Lower lobe of right lung (tissue), 2 donors: ENCODE measurements at regions of chr18 and their contacts with region 1.

Region 1: DNA sequence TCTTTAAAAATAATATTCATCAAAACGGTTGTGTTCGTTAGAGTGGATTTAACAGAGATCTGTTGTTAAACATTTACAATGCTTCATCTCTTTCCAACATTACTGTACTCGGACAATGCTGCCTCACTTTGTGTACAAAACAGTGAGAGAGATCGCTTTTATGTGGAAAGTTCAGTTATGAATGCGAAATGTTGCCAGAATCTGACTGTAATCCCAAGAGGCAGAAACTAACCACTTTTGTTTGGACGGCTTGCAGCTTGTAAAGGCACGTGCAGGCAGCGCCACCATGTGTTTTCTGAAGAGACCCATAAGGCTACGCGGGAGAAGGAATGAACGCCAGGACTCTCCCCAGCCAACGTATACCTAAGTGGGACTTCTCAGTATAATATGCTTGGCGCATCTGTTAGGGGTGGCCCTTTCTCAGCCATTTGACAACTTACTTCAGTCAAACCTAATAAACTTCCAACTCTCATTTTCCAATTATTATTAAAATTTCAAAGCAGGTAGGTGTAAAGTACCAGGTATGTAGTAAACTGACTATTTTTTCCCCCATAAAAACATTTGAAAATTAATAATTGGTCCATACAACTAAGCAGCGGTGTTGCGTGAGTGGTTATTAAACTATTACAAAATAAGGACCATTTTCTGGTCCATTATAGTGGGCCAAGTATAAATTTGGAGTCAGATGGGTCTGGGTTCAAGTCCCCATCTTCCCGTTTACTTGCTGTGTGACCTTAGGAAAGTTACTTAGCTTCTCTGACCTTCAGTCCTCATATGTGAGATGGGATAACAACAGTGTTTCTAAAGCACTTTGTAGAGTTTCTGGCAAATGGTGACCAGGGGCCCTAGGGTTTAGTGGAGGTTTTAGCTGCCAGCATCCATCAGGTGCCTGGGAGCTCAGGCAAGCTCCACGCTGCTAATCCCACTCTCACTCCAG is 5.6 kb upstream of the NAPG start:
- DNase-seq: peak; percentile 88
- ATAC-seq: peak; percentile 86 to 93
- H3K4me3 ChIP-seq: no peak overlapping the region
- H3K27ac ChIP-seq: no peak overlapping the region
- H3K4me1 ChIP-seq: peaks cover 26% of the 10 kb centered on the region
- H3K27me3 ChIP-seq: no peaks in the 10 kb centered on the region
- CTCF ChIP-seq: peak; percentile 78

Region 2: GRCh38 chr18:9971313-9971920 is 548.9 kb before region 1 on chr18:
- intact Hi-C with region 1: loop called (anchors 5 kb)
- DNase-seq: no peak
- ATAC-seq: peak; percentile 79
- H3K4me3 ChIP-seq: no peak overlapping the region
- H3K27ac ChIP-seq: no peak overlapping the region
- H3K4me1 ChIP-seq: peaks cover 8% of the 10 kb centered on the region
- H3K27me3 ChIP-seq: no peaks in the 10 kb centered on the region
- CTCF ChIP-seq: peak; percentile 83